ENCODE measurements at regions of chr3 and their contacts with region 1.

Region 1: GRCh38 chr3:119240591-119241434 is at the start of gene B4GALT4:
- DNase-seq: peak; percentile 87
- H3K4me3 ChIP-seq: peak within 1 kb of the TSS; percentile 39 to 78 (median 71)
- H3K27ac ChIP-seq: peak within 1 kb of the TSS; percentile 71
- H3K4me1 ChIP-seq: peaks cover 13% of the 10 kb centered on the region
- H3K27me3 ChIP-seq: no peaks in the 10 kb centered on the region
- CTCF ChIP-seq: peak in 1 of 2 donors; percentile 4
- POLR2A ChIP-seq: peak; percentile 79
- total RNA-seq, gene B4GALT4: 7.0 and 7.1 TPM in 2 replicates

Region 2: DNA sequence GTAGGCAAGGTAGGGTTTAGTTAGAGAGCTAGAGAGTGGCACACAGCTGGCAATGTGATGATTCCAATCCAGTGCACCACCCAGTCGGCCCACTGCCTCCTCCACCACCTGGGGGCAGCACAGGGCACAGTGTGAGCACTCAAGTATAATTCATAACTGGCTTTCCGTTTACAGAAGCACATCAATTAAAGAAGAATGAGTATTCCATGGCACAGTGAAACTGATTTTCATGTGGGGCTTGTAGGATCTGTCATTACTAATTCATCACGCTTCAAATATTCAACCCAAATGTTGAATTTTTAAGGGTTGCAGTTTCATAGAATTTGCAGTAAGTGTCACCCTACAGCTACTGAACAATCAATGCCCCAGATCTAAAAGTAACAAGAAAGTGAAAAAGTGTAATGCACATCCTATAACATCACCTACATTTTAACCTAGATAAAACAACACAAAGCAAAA is 356.0 kb before region 1 on chr3:
- CTCF ChIA-PET with region 1: interaction called, 36 read pairs
- POLR2A ChIA-PET with region 1: no interaction called
- dilution Hi-C with region 1: no loop called
- intact Hi-C with region 1: loop called (anchors 1 kb)
- DNase-seq: peak; percentile 52
- H3K4me3 ChIP-seq: no peak overlapping the region
- H3K27ac ChIP-seq: no peak overlapping the region
- H3K4me1 ChIP-seq: no peaks in the 10 kb centered on the region
- H3K27me3 ChIP-seq: no peaks in the 10 kb centered on the region
- CTCF ChIP-seq: peak; percentile 77 to 88
- POLR2A ChIP-seq: no peak

Region 3: DNA sequence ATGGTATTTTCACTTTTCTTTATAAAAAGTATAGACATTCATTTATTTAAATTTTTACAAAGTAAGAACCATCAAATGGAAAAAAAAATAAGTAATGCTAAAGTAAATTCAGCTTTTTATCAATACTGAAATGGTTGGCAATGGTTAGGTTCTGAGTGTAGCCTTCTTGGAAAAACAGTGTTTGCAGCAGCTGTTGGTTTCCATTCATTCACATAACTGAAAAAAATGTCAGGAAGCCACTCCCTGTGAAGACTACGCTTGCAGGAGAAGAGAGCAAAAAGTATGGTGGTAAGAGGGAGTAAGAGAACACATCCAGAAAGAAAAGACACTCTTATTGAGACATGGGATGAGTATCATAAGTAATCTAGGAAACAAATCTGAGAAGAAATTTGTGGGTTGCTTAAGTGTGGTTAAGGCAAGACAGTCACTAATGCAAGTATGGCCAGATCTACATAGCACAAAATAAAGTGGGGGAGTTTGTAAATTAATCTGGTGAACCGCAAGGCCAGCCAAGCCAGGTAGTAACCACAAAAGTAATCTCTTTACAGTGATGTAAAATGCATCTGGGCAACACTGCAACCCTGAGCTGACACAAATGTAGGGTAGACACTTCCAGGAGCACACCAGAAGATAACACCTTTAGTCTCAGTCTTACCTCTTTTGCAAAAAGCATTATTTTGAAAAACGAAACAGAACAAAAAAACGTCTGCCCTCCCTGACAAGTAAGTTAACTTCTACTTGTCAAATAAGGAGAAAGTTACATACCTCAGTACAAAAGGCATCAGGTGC is 339.9 kb before region 1 on chr3:
- CTCF ChIA-PET with region 1: no interaction called
- POLR2A ChIA-PET with region 1: no interaction called
- dilution Hi-C with region 1: no loop called
- intact Hi-C with region 1: no loop called
- DNase-seq: no peak
- H3K4me3 ChIP-seq: no peak overlapping the region
- H3K27ac ChIP-seq: no peak overlapping the region
- H3K4me1 ChIP-seq: no peaks in the 10 kb centered on the region
- H3K27me3 ChIP-seq: no peaks in the 10 kb centered on the region
- CTCF ChIP-seq: no peak
- POLR2A ChIP-seq: no peak

Region 4: DNA sequence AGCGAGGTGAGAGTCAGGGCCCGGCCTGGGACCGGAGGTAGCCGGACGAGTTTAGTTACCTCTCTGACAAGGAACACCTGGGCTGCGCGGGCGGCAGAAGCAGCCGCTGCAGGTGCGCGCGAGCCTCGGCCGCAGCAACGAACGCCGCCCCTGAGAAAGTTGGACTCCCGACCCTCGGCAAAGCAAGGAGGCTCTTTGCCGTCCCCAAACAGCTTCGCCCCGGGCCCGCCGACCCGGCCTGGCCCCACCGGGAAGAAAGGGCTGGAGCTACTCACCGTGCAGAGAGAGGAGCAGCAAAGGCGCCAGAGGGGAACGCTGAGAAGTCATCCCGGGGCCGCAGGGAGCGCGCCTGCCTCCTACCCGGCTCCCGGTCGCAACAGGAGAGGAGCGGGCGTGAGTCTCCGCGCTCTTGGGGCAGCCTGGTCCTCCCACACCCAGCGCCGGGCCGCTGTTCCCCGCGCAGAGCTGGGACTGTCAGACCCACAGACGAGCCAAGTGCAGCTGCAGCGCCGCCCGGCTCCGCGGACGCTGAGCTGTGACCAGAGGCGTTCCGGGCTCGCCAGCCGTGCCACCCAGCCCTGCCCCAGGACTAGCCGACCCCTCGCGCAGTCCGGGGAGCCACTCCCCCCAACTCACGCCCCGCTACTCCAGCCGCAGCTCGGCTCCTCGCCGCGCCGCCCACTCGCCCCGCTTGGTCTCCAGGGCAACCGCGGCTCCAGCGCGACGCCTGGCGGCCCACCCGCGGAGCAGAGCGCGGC is 206.4 kb before region 1 on chr3 and contains the start of gene IGSF11:
- CTCF ChIA-PET with region 1: interaction called, 3 read pairs
- POLR2A ChIA-PET with region 1: no interaction called
- dilution Hi-C with region 1: no loop called
- intact Hi-C with region 1: loop called (anchors 1 kb)
- DNase-seq: peak; percentile 61
- H3K4me3 ChIP-seq: peak within 1 kb of the TSS in 2 of 3 experiments; percentile 21 to 45
- H3K27ac ChIP-seq: no peak within 1 kb of the TSS
- H3K4me1 ChIP-seq: no peaks in the 10 kb centered on the region
- H3K27me3 ChIP-seq: peaks cover 28 to 46% of the 10 kb centered on the region in 2 experiments
- CTCF ChIP-seq: peak; percentile 51 to 54
- POLR2A ChIP-seq: no peak
- total RNA-seq, gene IGSF11: not detected in 2 replicates

Region 5: GRCh38 chr3:119145500-119146191 is 95.2 kb before region 1 on chr3 and contains the start of gene TEX55:
- CTCF ChIA-PET with region 1: interaction called, 33 read pairs
- POLR2A ChIA-PET with region 1: no interaction called
- dilution Hi-C with region 1: no loop called
- intact Hi-C with region 1: loop called (anchors 1 kb)
- DNase-seq: peak; percentile 30
- H3K4me3 ChIP-seq: no peak within 1 kb of the TSS
- H3K27ac ChIP-seq: no peak within 1 kb of the TSS
- H3K4me1 ChIP-seq: no peaks in the 10 kb centered on the region
- H3K27me3 ChIP-seq: no peaks in the 10 kb centered on the region
- CTCF ChIP-seq: peak; percentile 54 to 60
- POLR2A ChIP-seq: no peak
- total RNA-seq, gene TEX55: not detected in 2 replicates

Region 6: GRCh38 chr3:119257682-119258410 is 17.0 kb after region 1 on chr3:
- CTCF ChIA-PET with region 1: interaction called, 10 read pairs
- POLR2A ChIA-PET with region 1: interaction called, 4 read pairs
- dilution Hi-C with region 1: no loop called
- intact Hi-C with region 1: no loop called
- DNase-seq: no peak
- H3K4me3 ChIP-seq: no peak overlapping the region
- H3K27ac ChIP-seq: no peak overlapping the region
- H3K4me1 ChIP-seq: no peaks in the 10 kb centered on the region
- H3K27me3 ChIP-seq: peaks cover 2 to 7% of the 10 kb centered on the region in 2 experiments
- CTCF ChIP-seq: no peak
- POLR2A ChIP-seq: no peak

Region 7: GRCh38 chr3:119293871-119294695 is 53.3 kb after region 1 on chr3 and contains the start of gene ARHGAP31:
- CTCF ChIA-PET with region 1: interaction called, 9 read pairs
- POLR2A ChIA-PET with region 1: interaction called, 3 read pairs
- dilution Hi-C with region 1: no loop called
- intact Hi-C with region 1: loop called (anchors 2 kb)
- DNase-seq: peak; percentile 90
- H3K4me3 ChIP-seq: peak within 1 kb of the TSS; percentile 84 to 92 (median 86)
- H3K27ac ChIP-seq: peak within 1 kb of the TSS; percentile 78
- H3K4me1 ChIP-seq: peaks cover 32% of the 10 kb centered on the region
- H3K27me3 ChIP-seq: no peaks in the 10 kb centered on the region
- CTCF ChIP-seq: no peak
- POLR2A ChIP-seq: peak; percentile 77
- total RNA-seq, gene ARHGAP31: 64.8 and 65.8 TPM in 2 replicates

Region 8: DNA sequence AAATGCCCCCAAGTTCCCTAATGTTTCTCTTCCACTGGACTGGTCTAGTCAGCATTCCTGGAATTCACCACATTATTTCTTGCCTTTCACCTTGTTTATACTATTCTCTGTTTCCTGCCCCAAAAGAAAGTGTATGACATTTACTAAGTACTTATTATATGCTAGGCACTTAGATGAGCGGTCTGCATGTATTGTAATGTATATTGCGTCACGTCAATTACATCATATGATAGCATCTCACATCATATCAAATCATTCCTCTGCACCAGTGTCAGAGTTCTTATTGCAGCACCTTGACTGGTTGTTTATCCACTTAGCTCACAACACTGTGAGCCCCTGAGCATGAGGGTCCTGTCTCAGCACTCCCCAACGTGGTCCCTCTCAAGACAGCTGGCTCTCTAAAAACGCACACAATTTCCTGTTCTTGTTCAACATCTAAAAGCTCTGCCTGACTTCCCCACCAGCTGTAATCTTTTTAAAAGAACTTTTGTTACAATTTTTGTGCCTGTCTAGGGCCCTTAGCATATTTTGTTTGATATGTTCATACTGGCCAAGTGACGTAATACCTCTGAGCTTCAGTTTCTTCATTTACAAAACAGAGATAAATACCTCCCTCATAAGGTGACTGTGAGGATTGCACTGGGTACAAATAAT is 112.2 kb after region 1 on chr3:
- CTCF ChIA-PET with region 1: interaction called, 22 read pairs
- POLR2A ChIA-PET with region 1: interaction called, 4 read pairs
- dilution Hi-C with region 1: no loop called
- intact Hi-C with region 1: loop called (anchors 1 kb)
- DNase-seq: peak; percentile 63
- H3K4me3 ChIP-seq: no peak overlapping the region
- H3K27ac ChIP-seq: no peak overlapping the region
- H3K4me1 ChIP-seq: peaks cover 53% of the 10 kb centered on the region
- H3K27me3 ChIP-seq: no peaks in the 10 kb centered on the region
- CTCF ChIP-seq: no peak
- POLR2A ChIP-seq: no peak

Measured in endothelial cell of umbilical vein (primary cell).